Naive thymus-derived CD8-positive, alpha-beta T cell (primary cell): ENCODE measurements at regions of chr2 and their contacts with region 1.

Region 1: GRCh38 chr2:61176755-61177726 is 15.1 kb downstream of the C2orf74 start:
- DNase-seq: peak; percentile 85 to 98 (median 92)
- ATAC-seq: peak; percentile 87 to 89
- H3K4me3 Mint-ChIP-seq: peak overlapping the region; percentile 80 to 97 (median 93)
- H3K27ac Mint-ChIP-seq: peak overlapping the region; percentile 89 to 99 (median 94)
- H3K4me1 Mint-ChIP-seq: peaks cover 32 to 58% (median 54%) of the 10 kb centered on the region in 4 donors
- H3K27me3 Mint-ChIP-seq: no peaks in the 10 kb centered on the region

Region 2: GRCh38 chr2:61016808-61017555 is 160.1 kb before region 1 on chr2:
- POLR2A ChIA-PET with region 1: interaction called, 14 read pairs
- DNase-seq: peak; percentile 42 to 83 (median 62)
- ATAC-seq: peak; percentile 72 to 74
- H3K4me3 Mint-ChIP-seq: peak overlapping the region; percentile 96 to 100 (median 99)
- H3K27ac Mint-ChIP-seq: peak overlapping the region; percentile 95 to 99 (median 97)
- H3K4me1 Mint-ChIP-seq: peaks cover 10 to 51% (median 44%) of the 10 kb centered on the region in 4 donors
- H3K27me3 Mint-ChIP-seq: no peaks in the 10 kb centered on the region

Region 3: DNA sequence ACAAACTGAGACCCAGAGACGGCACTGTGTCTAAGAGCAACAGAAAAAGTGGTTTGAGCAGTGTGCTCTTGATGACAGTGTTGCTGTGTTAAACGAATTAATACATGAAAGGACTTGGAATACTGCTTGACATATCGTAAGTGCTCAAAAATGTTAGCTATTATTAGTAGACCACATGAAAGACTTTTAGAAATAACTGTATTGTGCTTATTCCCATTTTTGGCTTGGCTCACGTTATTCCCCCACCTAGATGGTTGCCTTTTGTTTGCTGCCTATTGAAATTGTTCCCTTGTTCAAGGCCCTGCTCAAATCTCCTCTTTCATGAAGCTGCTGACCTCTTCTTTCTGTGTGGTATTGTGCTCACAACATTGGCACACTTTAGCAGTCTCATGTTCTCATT is 42.9 kb before region 1 on chr2:
- POLR2A ChIA-PET with region 1: no interaction called
- DNase-seq: no peak
- ATAC-seq: no peak
- H3K4me3 Mint-ChIP-seq: no peak overlapping the region
- H3K27ac Mint-ChIP-seq: no peak overlapping the region
- H3K4me1 Mint-ChIP-seq: peaks cover 0 to 1% (median 0%) of the 10 kb centered on the region in 4 donors
- H3K27me3 Mint-ChIP-seq: no peaks in the 10 kb centered on the region

Region 4: GRCh38 chr2:61144697-61145268 is 32.3 kb before region 1 on chr2:
- POLR2A ChIA-PET with region 1: interaction called, 53 read pairs
- DNase-seq: peak; percentile 81 to 96 (median 90)
- ATAC-seq: peak; percentile 86 to 92
- H3K4me3 Mint-ChIP-seq: peak overlapping the region; percentile 85 to 98 (median 96)
- H3K27ac Mint-ChIP-seq: peak overlapping the region; percentile 90 to 99 (median 97)
- H3K4me1 Mint-ChIP-seq: peaks cover 0 to 26% (median 10%) of the 10 kb centered on the region in 4 donors
- H3K27me3 Mint-ChIP-seq: no peaks in the 10 kb centered on the region